MCF 10A (cell line): ENCODE measurements at regions of chr17 and their contacts with region 1.

Region 1: GRCh38 chr17:7219812-7220581 is at the starts of genes ACADVL and DLG4:
- DNase-seq: peak; percentile 94
- H3K4me3 Mint-ChIP-seq: peak within 1 kb of the TSS; percentile 86
- H3K27ac Mint-ChIP-seq: peak within 1 kb of the TSS; percentile 96
- H3K4me1 Mint-ChIP-seq: peaks cover 37% of the 10 kb centered on the region
- H3K27me3 Mint-ChIP-seq: no peaks in the 10 kb centered on the region
- CTCF ChIP-seq: no peak
- total RNA-seq, gene ACADVL: 387 and 413 TPM in 2 replicates
- total RNA-seq, gene DLG4: 7.6 TPM in 2 replicates

Region 2: DNA sequence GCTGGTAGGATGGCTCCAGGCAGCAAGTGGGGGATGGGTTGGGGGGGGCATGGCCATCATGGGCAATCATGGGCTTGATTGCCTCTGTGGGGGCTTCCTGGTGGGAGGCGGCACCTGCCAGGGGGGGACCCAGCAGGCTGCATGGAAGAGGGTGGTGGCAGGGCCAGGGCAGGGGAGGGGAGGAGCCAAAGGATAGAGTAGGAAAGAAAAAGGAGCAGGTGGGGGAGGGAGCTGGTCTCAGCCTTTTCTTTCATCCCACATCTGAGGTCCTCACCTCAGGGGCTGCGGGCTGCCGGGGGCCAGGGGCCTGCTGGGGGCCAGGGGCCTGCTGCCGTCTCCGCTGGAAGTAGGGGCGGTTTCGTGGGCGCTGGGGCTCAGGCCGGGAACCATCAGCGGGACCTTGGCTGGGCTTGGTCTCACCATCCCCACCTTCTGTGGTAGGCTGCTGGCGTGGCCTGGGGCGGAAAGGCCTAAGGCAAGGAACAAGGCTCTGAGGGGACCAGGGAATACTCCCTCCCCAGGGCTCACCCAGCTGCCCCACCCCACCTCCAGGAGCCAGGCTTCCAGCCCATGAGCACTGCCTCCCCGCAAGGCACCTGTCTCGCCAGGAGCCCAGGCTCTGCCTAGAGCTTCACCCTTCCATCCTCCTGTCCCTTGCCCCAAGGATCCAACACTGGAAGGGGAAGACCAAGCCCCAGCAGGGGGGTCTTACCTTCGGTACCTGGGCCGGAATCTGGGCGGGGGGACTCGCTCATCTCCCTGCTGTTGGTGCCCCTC is 69.4 kb after region 1 on chr17:
- CTCF ChIA-PET with region 1: no interaction called
- POLR2A ChIA-PET with region 1: no interaction called
- intact Hi-C with region 1: no loop called
- DNase-seq: no peak
- H3K4me3 Mint-ChIP-seq: no peak overlapping the region
- H3K27ac Mint-ChIP-seq: no peak overlapping the region
- H3K4me1 Mint-ChIP-seq: peaks cover 11% of the 10 kb centered on the region
- H3K27me3 Mint-ChIP-seq: peaks cover 22% of the 10 kb centered on the region
- CTCF ChIP-seq: no peak

Region 3: GRCh38 chr17:7314719-7315569 is 94.9 kb after region 1 on chr17 and contains the start of gene GPS2:
- CTCF ChIA-PET with region 1: no interaction called
- POLR2A ChIA-PET with region 1: interaction called, 15 read pairs
- intact Hi-C with region 1: no loop called
- DNase-seq: peak; percentile 86
- H3K4me3 Mint-ChIP-seq: peak within 1 kb of the TSS; percentile 85
- H3K27ac Mint-ChIP-seq: peak within 1 kb of the TSS; percentile 84
- H3K4me1 Mint-ChIP-seq: peaks cover 36% of the 10 kb centered on the region
- H3K27me3 Mint-ChIP-seq: no peaks in the 10 kb centered on the region
- CTCF ChIP-seq: no peak
- total RNA-seq, gene GPS2: 29.4 and 49.8 TPM in 2 replicates